ENCODE measurements at regions of chr4 and their contacts with region 1.

Region 1: GRCh38 chr4:68476191-68476590 is 28.9 kb downstream of the TMPRSS11E start:
- DNase-seq: no peak
- ATAC-seq: no peak
- H3K4me3 ChIP-seq: no peak overlapping the region
- H3K4me3 Mint-ChIP-seq: no peak overlapping the region
- H3K27ac ChIP-seq: no peak overlapping the region
- H3K27ac Mint-ChIP-seq: no peak overlapping the region
- H3K4me1 ChIP-seq: no peaks in the 10 kb centered on the region
- H3K4me1 Mint-ChIP-seq: no peaks in the 10 kb centered on the region
- H3K27me3 ChIP-seq: no peaks in the 10 kb centered on the region
- H3K27me3 Mint-ChIP-seq: no peaks in the 10 kb centered on the region
- CTCF ChIP-seq: no peak

Region 2: GRCh38 chr4:68319040-68319439 is 157.2 kb before region 1 on chr4:
- CTCF ChIA-PET with region 1: no interaction called
- POLR2A ChIA-PET with region 1: no interaction called
- intact Hi-C with region 1: no loop called
- DNase-seq: peak in 1 of 14 experiments; percentile 4
- ATAC-seq: no peak
- H3K4me3 ChIP-seq: no peak overlapping the region
- H3K4me3 Mint-ChIP-seq: no peak overlapping the region
- H3K27ac ChIP-seq: no peak overlapping the region
- H3K27ac Mint-ChIP-seq: peak overlapping the region; percentile 6
- H3K4me1 ChIP-seq: no peaks in the 10 kb centered on the region
- H3K4me1 Mint-ChIP-seq: peaks cover 5% of the 10 kb centered on the region
- H3K27me3 ChIP-seq: no peaks in the 10 kb centered on the region
- H3K27me3 Mint-ChIP-seq: no peaks in the 10 kb centered on the region
- CTCF ChIP-seq: no peak

Region 3: GRCh38 chr4:69156913-69157312 is 680.7 kb after region 1 on chr4:
- CTCF ChIA-PET with region 1: no interaction called
- POLR2A ChIA-PET with region 1: no interaction called
- intact Hi-C with region 1: loop called in 1 of 2 experiments (anchors 5 kb)
- DNase-seq: no peak
- ATAC-seq: no peak
- H3K4me3 ChIP-seq: no peak overlapping the region
- H3K4me3 Mint-ChIP-seq: no peak overlapping the region
- H3K27ac ChIP-seq: no peak overlapping the region
- H3K27ac Mint-ChIP-seq: no peak overlapping the region
- H3K4me1 ChIP-seq: no peaks in the 10 kb centered on the region
- H3K4me1 Mint-ChIP-seq: no peaks in the 10 kb centered on the region
- H3K27me3 ChIP-seq: no peaks in the 10 kb centered on the region
- H3K27me3 Mint-ChIP-seq: no peaks in the 10 kb centered on the region
- CTCF ChIP-seq: no peak